MCF 10A (cell line): ENCODE measurements at regions of chr2 and their contacts with region 1.

Region 1: GRCh38 chr2:190583507-190584337 is 49.2 kb upstream of the NEMP2 start:
- DNase-seq: no peak
- H3K4me3 Mint-ChIP-seq: no peak overlapping the region
- H3K27ac Mint-ChIP-seq: peak overlapping the region; percentile 81
- H3K4me1 Mint-ChIP-seq: peaks cover 44% of the 10 kb centered on the region
- H3K27me3 Mint-ChIP-seq: no peaks in the 10 kb centered on the region
- CTCF ChIP-seq: no peak

Region 2: DNA sequence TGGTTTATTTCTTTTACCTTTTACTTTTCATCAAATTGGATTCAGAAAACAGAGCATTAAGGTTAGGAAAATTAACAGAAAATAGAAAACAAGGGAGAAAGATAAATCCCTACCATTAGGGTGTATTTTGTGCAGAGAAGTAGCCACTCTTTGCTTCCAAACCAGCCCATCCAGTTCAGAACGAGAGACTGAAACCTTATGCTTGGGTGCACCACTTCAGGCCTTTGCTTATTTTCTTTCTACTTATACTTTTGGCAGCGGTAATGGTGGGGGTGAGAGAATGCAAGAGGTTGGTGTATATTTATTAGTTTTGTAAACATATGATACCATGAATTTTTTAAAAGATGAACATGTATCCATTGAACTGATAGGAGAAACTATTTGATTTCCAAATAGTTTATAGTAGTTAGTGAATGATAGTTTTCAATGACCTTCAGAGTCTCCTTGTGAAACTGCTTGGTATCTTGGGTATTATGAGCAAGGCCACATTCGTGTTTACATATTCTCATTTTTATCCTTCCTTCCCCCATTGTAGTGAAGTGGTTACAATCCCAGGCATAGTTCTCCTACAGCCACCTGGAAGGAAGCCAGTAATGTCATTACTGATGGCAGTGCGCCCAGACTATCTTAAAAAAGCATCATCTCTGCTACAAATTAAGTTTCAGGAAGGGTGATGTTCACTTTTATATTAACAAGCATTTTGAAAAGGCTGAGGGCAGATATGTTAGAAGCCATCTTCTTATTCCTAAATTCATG is 114.7 kb before region 1 on chr2:
- CTCF ChIA-PET with region 1: no interaction called
- POLR2A ChIA-PET with region 1: no interaction called
- intact Hi-C with region 1: no loop called
- DNase-seq: peak; percentile 95
- H3K4me3 Mint-ChIP-seq: no peak overlapping the region
- H3K27ac Mint-ChIP-seq: peak overlapping the region; percentile 86
- H3K4me1 Mint-ChIP-seq: peaks cover 22% of the 10 kb centered on the region
- H3K27me3 Mint-ChIP-seq: no peaks in the 10 kb centered on the region
- CTCF ChIP-seq: no peak

Region 3: DNA sequence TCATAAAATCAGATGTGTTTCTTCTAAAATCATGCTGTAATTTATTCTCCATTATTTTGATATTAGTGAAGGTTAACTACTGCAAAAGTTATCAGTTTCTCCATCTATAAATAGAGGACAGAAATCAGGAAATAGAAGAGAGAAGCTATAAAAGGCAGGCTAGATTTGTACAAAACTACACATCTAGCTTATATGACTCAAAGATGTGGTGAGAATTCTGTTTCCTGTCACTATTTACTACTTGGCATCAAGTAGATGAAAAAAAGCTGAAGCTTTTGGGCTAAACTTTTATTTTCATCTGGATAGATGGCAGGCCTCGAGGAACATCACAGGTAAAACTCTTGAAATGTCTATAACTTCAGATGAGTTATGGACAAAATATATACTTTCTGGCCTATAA is 15.4 kb after region 1 on chr2:
- CTCF ChIA-PET with region 1: interaction called, 8 read pairs
- POLR2A ChIA-PET with region 1: interaction called, 96 read pairs
- intact Hi-C with region 1: no loop called
- DNase-seq: no peak
- H3K4me3 Mint-ChIP-seq: no peak overlapping the region
- H3K27ac Mint-ChIP-seq: no peak overlapping the region
- H3K4me1 Mint-ChIP-seq: peaks cover 55% of the 10 kb centered on the region
- H3K27me3 Mint-ChIP-seq: no peaks in the 10 kb centered on the region
- CTCF ChIP-seq: no peak